ENCODE measurements at regions of chr2 and their contacts with region 1.

Region 1: GRCh38 chr2:149017116-149017985 is 21.1 kb upstream of the LYPD6B start:
- DNase-seq: peak; percentile 70 to 78
- H3K4me3 ChIP-seq: no peak overlapping the region
- H3K27ac ChIP-seq: no peak overlapping the region
- H3K4me1 ChIP-seq: no peaks in the 10 kb centered on the region
- H3K27me3 ChIP-seq: no peaks in the 10 kb centered on the region
- CTCF ChIP-seq: peak; percentile 74 to 84

Region 2: DNA sequence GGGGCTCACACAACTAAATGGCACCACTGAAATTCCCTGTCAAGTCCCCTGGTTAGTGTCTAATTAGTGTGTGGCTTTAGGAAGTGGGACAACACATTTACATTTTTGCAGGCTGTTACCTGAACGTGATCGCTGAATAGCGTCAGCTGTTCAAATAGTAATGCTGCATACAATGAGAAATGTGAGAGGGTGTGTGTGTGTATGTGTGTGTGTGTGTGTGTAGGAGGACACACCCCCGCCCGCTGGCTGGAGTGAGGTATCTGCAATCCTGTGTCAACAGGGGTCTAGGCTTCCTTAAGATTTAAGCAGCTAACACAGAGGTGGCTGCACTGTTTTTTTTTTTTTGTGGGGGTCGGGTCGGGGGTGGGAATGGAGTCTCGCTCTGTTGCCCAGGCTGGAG is 16.4 kb after region 1 on chr2:
- intact Hi-C with region 1: no loop called
- DNase-seq: no peak
- H3K4me3 ChIP-seq: no peak overlapping the region
- H3K27ac ChIP-seq: no peak overlapping the region
- H3K4me1 ChIP-seq: peaks cover 0 to 6% (median 4%) of the 10 kb centered on the region in 4 donors
- H3K27me3 ChIP-seq: peaks cover 0 to 56% of the 10 kb centered on the region in 2 donors
- CTCF ChIP-seq: no peak

Region 3: GRCh38 chr2:149561309-149561926 is 544.1 kb after region 1 on chr2:
- intact Hi-C with region 1: loop called (anchors 5 kb)
- DNase-seq: no peak
- H3K4me3 ChIP-seq: no peak overlapping the region
- H3K27ac ChIP-seq: no peak overlapping the region
- H3K4me1 ChIP-seq: peaks cover 0 to 11% (median 0%) of the 10 kb centered on the region in 4 donors
- H3K27me3 ChIP-seq: no peaks in the 10 kb centered on the region
- CTCF ChIP-seq: peak; percentile 78 to 84